Spleen (tissue), 13 donors: ENCODE measurements at regions of chr19 and their contacts with region 1.

Region 1: GRCh38 chr19:41310033-41310758 is at the start of gene CCDC97:
- DNase-seq: peak; percentile 96
- H3K4me3 ChIP-seq: peak within 1 kb of the TSS; percentile 56 to 86 (median 72)
- H3K27ac ChIP-seq: peak within 1 kb of the TSS; percentile 88 to 98 (median 97)
- H3K4me1 ChIP-seq: peaks cover 48 to 93% (median 69%) of the 10 kb centered on the region in 6 donors
- H3K27me3 ChIP-seq: no peaks in the 10 kb centered on the region
- CTCF ChIP-seq: peak in 1 of 11 experiments; percentile 20
- POLR2A ChIP-seq: peak; percentile 51 to 67 (median 59)
- total RNA-seq, gene CCDC97: 20.5 to 38.2 (median 29.7) TPM

Region 2: DNA sequence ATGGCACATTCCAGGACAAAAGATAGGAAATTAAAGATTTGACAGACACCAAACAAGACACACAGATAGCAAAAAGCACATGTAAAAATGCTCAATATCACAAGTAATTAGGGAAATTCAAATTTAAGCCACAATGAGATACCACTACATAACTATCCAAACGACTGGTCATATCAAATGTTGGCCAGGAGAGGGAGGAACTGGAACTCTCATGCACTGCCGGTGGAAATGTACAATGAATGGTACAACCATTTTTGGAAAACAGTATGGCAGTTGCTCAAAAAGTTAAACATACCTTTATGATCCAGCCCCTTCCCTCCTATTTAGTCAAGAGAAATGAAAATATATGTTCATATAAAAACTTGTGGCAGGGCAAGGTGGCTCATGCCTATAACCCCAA is 154.0 kb before region 1 on chr19:
- intact Hi-C with region 1: no loop called
- DNase-seq: no peak
- H3K4me3 ChIP-seq: no peak overlapping the region
- H3K27ac ChIP-seq: no peak overlapping the region
- H3K4me1 ChIP-seq: no peaks in the 10 kb centered on the region
- H3K27me3 ChIP-seq: peaks cover 0 to 4% (median 0%) of the 10 kb centered on the region in 7 donors
- CTCF ChIP-seq: no peak
- POLR2A ChIP-seq: no peak

Region 3: GRCh38 chr19:41206926-41207750 is 103.1 kb before region 1 on chr19:
- intact Hi-C with region 1: loop called (anchors 5 kb)
- DNase-seq: no peak
- H3K4me3 ChIP-seq: no peak overlapping the region
- H3K27ac ChIP-seq: peak overlapping the region in 5 of 8 donors; percentile 32 to 50 (median 43)
- H3K4me1 ChIP-seq: peaks cover 0 to 9% (median 2%) of the 10 kb centered on the region in 6 donors
- H3K27me3 ChIP-seq: peaks cover 0 to 11% (median 0%) of the 10 kb centered on the region in 7 donors
- CTCF ChIP-seq: no peak
- POLR2A ChIP-seq: no peak